PC-3 (cell line): ENCODE measurements at regions of chr11 and their contacts with region 1.

Region 1: DNA sequence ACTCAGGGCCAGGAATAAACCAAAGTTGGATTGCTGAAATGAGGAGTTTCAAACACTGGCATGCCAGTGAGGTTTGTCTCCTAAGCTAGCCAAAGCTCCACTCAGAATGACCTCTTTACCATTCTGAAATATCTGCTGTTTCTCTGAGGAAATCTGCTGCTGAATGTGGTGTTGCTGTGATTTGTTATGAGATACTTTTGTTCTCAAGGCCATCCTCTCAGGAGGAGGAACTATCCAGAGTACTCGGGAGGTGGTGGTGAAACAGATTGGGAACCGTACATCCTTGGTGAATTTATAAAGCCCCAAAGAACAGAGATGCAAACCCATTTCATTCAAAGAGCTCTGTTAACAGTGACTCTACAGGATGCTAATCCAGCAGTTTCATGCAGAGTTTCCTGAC is 50.5 kb downstream of the BDNF start:
- DNase-seq: no peak
- ATAC-seq: no peak
- H3K4me3 ChIP-seq: no peak overlapping the region
- H3K27ac ChIP-seq: no peak overlapping the region
- H3K4me1 ChIP-seq: no peaks in the 10 kb centered on the region
- H3K27me3 ChIP-seq: no peaks in the 10 kb centered on the region
- CTCF ChIP-seq: no peak

Region 2: DNA sequence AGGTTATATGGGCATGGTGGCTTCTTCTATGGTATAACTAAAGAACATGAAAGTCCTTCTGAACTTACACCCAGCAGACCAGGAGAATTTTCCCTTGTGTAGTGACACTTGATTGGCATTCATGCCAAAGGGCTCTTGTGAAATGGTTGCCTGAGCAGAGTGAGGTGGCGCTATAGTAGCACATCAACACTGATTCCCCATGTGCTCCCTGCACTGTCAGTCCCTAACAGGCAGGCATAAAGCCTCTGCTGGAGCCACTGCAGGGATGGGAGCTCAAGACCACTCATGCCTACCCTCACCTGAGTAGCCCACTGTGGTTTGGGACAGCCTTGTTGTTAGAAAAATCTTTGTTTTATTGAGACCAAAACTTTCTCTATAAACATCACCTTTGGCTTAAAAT is 50.6 kb before region 1 on chr11:
- CTCF ChIA-PET with region 1: no interaction called
- POLR2A ChIA-PET with region 1: interaction called, 25 read pairs
- intact Hi-C with region 1: no loop called
- DNase-seq: no peak
- ATAC-seq: no peak
- H3K4me3 ChIP-seq: no peak overlapping the region
- H3K27ac ChIP-seq: no peak overlapping the region
- H3K4me1 ChIP-seq: no peaks in the 10 kb centered on the region
- H3K27me3 ChIP-seq: no peaks in the 10 kb centered on the region
- CTCF ChIP-seq: no peak